HCT116 (cell line): ENCODE measurements at regions of chr1 and their contacts with region 1.

Region 1: GRCh38 chr1:2412519-2413233 is at the start of gene PEX10:
- DNase-seq: peak; percentile 88
- ATAC-seq: peak; percentile 82
- H3K4me3 ChIP-seq: peak within 1 kb of the TSS; percentile 96 to 99
- H3K27ac ChIP-seq: peak within 1 kb of the TSS; percentile 98
- H3K4me1 ChIP-seq: peaks cover 14 to 39% of the 10 kb centered on the region in 2 experiments; a peak in 3 of 4 replicates
- H3K27me3 ChIP-seq: no peaks in the 10 kb centered on the region
- CTCF ChIP-seq: no peak
- POLR2A ChIP-seq: peak; percentile 60
- RAD21 ChIP-seq: no peak
- total RNA-seq, gene PEX10: 27.9 TPM

Region 2: GRCh38 chr1:2459757-2460156 is 47.1 kb after region 1 on chr1:
- CTCF ChIA-PET with region 1: no interaction called
- POLR2A ChIA-PET with region 1: no interaction called
- RAD21 ChIA-PET with region 1: no interaction called
- intact Hi-C with region 1: no loop called
- DNase-seq: no peak
- ATAC-seq: no peak
- H3K4me3 ChIP-seq: no peak overlapping the region
- H3K27ac ChIP-seq: no peak overlapping the region
- H3K4me1 ChIP-seq: no peaks in the 10 kb centered on the region
- H3K27me3 ChIP-seq: no peaks in the 10 kb centered on the region
- CTCF ChIP-seq: no peak
- POLR2A ChIP-seq: no peak
- RAD21 ChIP-seq: no peak

Region 3: GRCh38 chr1:2525920-2526823 is 113.5 kb after region 1 on chr1 and contains the start of gene PANK4:
- CTCF ChIA-PET with region 1: no interaction called
- POLR2A ChIA-PET with region 1: no interaction called
- RAD21 ChIA-PET with region 1: no interaction called
- intact Hi-C with region 1: loop called (anchors 5 kb)
- DNase-seq: peak; percentile 83
- ATAC-seq: peak; percentile 97
- H3K4me3 ChIP-seq: peak within 1 kb of the TSS; percentile 97
- H3K27ac ChIP-seq: peak within 1 kb of the TSS; percentile 84
- H3K4me1 ChIP-seq: peaks cover 15 to 20% of the 10 kb centered on the region in 2 experiments; a peak in 3 of 4 replicates
- H3K27me3 ChIP-seq: no peaks in the 10 kb centered on the region
- CTCF ChIP-seq: no peak
- POLR2A ChIP-seq: no peak
- RAD21 ChIP-seq: no peak
- total RNA-seq, gene PANK4: 38.5 TPM

Region 4: DNA sequence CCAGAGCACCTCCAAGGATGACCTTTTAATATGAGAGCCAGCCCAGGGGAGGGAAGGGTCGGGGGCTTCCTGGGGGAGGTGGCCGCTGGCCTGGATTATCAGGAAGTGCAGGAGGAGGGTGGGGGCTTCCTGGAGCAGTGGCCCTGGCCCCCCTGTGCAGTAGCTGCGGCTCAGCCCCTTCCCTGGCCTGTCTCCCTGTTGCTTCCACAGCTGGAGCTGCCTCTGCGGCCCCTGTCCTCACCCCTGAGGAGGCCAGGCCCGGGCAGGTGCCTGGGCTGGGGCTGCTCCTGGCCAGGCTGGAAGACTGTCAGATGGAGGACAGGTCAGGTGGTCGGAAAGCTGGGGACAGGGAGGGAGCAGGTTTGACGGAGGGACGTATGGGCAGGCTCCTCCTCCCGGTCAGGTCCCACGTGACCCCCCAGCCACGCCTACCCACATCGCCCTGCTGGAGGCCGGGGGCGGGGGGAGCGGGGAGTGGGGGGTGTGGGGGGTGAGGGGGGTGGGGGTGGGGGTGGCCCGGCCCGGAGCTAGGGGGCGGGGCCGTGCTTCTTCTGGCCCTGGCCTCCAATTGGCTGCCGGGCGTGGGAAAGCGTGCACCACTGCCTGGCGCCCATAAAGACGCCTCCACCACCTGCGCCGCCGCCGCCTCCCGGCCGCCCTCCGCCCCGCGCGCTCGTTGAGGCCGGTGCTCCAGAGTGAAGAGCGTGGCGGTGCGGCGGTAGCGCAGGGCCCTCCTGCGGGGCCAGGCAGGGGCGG is 133.3 kb after region 1 on chr1:
- CTCF ChIA-PET with region 1: interaction called, 13 read pairs
- POLR2A ChIA-PET with region 1: interaction called, 5 read pairs
- RAD21 ChIA-PET with region 1: interaction called in 1 of 2 experiments, 5 read pairs
- intact Hi-C with region 1: loop called (anchors 1 kb)
- DNase-seq: peak; percentile 82
- ATAC-seq: peak; percentile 75
- H3K4me3 ChIP-seq: peak overlapping the region; percentile 66 to 70
- H3K27ac ChIP-seq: peak overlapping the region; percentile 93
- H3K4me1 ChIP-seq: peaks cover 24 to 51% of the 10 kb centered on the region in 2 experiments
- H3K27me3 ChIP-seq: no peaks in the 10 kb centered on the region
- CTCF ChIP-seq: no peak
- POLR2A ChIP-seq: peak; percentile 69
- RAD21 ChIP-seq: no peak

Region 5: GRCh38 chr1:2642560-2643413 is 230.1 kb after region 1 on chr1:
- CTCF ChIA-PET with region 1: no interaction called
- POLR2A ChIA-PET with region 1: no interaction called
- RAD21 ChIA-PET with region 1: no interaction called
- intact Hi-C with region 1: loop called (anchors 5 kb)
- DNase-seq: peak; percentile 73
- ATAC-seq: peak; percentile 84
- H3K4me3 ChIP-seq: peak overlapping the region; percentile 82 to 92
- H3K27ac ChIP-seq: peak overlapping the region; percentile 92
- H3K4me1 ChIP-seq: peaks cover 6 to 28% of the 10 kb centered on the region in 2 experiments; a peak in 3 of 4 replicates
- H3K27me3 ChIP-seq: no peaks in the 10 kb centered on the region
- CTCF ChIP-seq: no peak
- POLR2A ChIP-seq: peak; percentile 42
- RAD21 ChIP-seq: no peak

Region 6: GRCh38 chr1:2801535-2802291 is 389.0 kb after region 1 on chr1 and contains the start of gene TTC34:
- CTCF ChIA-PET with region 1: no interaction called
- POLR2A ChIA-PET with region 1: no interaction called
- RAD21 ChIA-PET with region 1: no interaction called
- intact Hi-C with region 1: loop called (anchors 5 kb)
- DNase-seq: peak; percentile 36
- ATAC-seq: peak; percentile 99
- H3K4me3 ChIP-seq: no peak within 1 kb of the TSS
- H3K27ac ChIP-seq: no peak within 1 kb of the TSS
- H3K4me1 ChIP-seq: 0 out of 4 replicates have a peak, but pooled peaks cover 0 to 4% of the 10 kb centered on the region in 2 experiments
- H3K27me3 ChIP-seq: no peaks in the 10 kb centered on the region
- CTCF ChIP-seq: peak; percentile 74 to 91 (median 85)
- POLR2A ChIP-seq: no peak
- RAD21 ChIP-seq: peak; percentile 94
- total RNA-seq, gene TTC34: 1.3 TPM